H1 (cell line): ENCODE measurements at regions of chr9 and their contacts with region 1.

Region 1: GRCh38 chr9:34451545-34451944 is 6.8 kb downstream of the FAM219A start:
- DNase-seq: no peak
- H3K4me3 ChIP-seq: no peak overlapping the region
- H3K27ac ChIP-seq: no peak overlapping the region
- H3K4me1 ChIP-seq: peaks cover 0 to 4% (median 3%) of the 10 kb centered on the region in 4 experiments; a peak in 3 of 7 replicates
- H3K27me3 ChIP-seq: no peaks in the 10 kb centered on the region; a peak in 2 of 7 replicates
- CTCF ChIP-seq: no peak
- EP300 ChIP-seq: no peak
- POLR2A ChIP-seq: no peak
- RAD21 ChIP-seq: no peak

Region 2: DNA sequence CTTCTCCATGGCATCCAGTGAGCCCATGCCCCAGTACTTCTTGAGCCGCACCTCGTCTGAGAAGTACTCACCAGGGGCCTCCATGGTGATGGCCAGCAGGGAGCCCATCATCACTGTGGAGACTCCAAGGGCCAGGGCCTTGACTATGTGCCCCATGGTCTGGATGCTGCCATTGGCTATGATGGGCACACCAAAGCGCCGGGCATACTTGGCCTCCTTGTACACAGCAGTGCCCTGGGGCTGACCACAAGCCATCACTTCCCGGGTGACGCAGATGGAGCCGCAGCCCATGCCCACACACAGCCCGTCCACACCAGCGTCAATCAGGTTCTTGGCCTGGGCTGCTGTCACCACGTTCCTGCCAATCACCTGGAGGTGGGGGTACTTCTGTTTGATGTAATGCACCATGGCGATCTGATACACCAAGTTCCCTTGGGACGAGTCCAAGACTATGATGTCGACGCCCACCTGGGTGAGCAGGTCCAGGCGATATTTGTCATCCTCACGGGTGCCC is 318.1 kb before region 1 on chr9:
- CTCF ChIA-PET with region 1: no interaction called
- POLR2A ChIA-PET with region 1: no interaction called
- DNase-seq: no peak
- H3K4me3 ChIP-seq: no peak overlapping the region
- H3K27ac ChIP-seq: no peak overlapping the region
- H3K4me1 ChIP-seq: no peaks in the 10 kb centered on the region
- H3K27me3 ChIP-seq: no peaks in the 10 kb centered on the region
- CTCF ChIP-seq: no peak
- EP300 ChIP-seq: no peak
- POLR2A ChIP-seq: no peak
- RAD21 ChIP-seq: no peak

Region 3: DNA sequence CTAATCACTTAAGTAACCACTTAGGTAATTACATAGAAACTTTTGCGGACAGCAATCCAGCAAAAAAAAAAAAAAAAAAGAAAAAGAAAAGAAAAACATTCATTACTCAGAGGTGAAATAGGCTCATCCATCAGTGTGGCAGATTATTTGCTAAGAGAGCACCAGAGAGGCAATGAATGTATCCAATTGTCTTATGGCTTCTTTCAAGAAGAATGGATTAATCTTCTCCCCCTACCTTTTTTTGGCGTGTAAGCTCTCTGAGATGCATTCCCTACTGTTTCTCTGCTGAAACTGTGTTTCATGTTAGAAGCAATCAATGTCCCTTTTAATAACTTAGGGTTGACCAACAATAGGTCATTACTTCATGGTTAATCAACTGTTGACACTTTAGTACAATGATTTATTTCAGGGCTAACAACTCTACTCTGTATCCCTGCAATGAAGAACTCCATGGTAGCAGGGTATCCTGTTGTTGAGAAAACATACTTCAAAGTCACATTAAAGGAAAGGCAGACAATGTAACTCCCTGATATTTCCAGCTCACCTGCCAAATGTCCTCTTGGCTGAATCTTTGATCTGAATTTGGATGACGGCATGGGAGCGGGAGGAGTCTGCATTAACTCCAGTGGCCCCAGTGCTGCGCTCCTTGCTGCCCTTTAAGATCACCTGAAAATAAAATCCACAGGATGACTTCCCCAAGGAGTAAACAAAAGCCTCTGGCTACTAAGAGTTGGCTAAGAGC is 180.1 kb before region 1 on chr9:
- CTCF ChIA-PET with region 1: no interaction called
- POLR2A ChIA-PET with region 1: no interaction called
- DNase-seq: no peak
- H3K4me3 ChIP-seq: no peak overlapping the region
- H3K27ac ChIP-seq: no peak overlapping the region
- H3K4me1 ChIP-seq: no peaks in the 10 kb centered on the region
- H3K27me3 ChIP-seq: no peaks in the 10 kb centered on the region
- CTCF ChIP-seq: no peak
- EP300 ChIP-seq: no peak
- POLR2A ChIP-seq: no peak
- RAD21 ChIP-seq: no peak

Region 4: DNA sequence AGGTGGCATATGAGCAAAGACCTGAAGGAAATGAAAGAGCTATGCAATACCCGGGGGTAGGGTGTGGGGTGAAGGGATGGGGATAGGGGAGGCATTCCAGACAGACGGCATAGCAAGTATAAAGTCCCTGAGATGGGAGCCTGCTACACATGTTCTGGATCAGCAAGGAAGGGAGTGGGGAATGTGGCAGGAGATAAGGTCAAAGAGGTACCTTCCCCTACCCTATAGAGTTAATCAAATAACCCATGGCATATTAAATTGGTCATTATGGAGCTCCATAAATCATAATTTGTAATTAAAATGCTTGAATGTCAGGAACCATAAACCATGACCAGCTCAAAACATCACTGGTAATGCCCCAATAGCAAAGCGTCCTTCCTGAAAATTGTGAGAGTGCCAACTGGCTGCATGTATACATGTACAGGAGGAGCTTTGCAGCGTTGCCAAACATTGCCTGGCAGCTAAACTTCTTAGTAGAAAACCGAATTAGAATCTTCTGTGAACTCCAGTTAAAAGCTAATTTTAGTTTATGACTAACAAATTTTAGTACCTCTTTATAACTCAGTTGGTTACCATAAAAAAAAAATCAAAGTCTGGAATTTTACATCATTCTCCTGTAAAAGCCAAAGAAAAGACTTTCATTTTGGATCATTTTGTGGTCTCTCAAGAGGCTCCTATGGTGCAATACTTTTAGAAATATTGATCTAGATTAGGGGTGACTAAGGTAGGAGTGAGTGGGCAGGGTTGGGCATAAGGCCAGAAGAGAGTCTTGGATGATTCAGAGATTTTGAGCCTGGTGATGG is 11.8 kb after region 1 on chr9:
- CTCF ChIA-PET with region 1: interaction called, 10 read pairs
- POLR2A ChIA-PET with region 1: interaction called, 6 read pairs
- DNase-seq: no peak
- H3K4me3 ChIP-seq: no peak overlapping the region
- H3K27ac ChIP-seq: no peak overlapping the region
- H3K4me1 ChIP-seq: peaks cover 0 to 5% (median 1%) of the 10 kb centered on the region in 4 experiments; a peak in 3 of 7 replicates
- H3K27me3 ChIP-seq: peaks cover 0 to 2% (median under 1%) of the 10 kb centered on the region in 4 experiments; a peak in 2 of 7 replicates
- CTCF ChIP-seq: no peak
- EP300 ChIP-seq: no peak
- POLR2A ChIP-seq: no peak
- RAD21 ChIP-seq: no peak

Region 5: GRCh38 chr9:34517185-34517584 is 65.6 kb after region 1 on chr9:
- CTCF ChIA-PET with region 1: no interaction called
- POLR2A ChIA-PET with region 1: no interaction called
- DNase-seq: no peak
- H3K4me3 ChIP-seq: no peak overlapping the region
- H3K27ac ChIP-seq: no peak overlapping the region
- H3K4me1 ChIP-seq: peaks cover 13 to 19% (median 17%) of the 10 kb centered on the region in 4 experiments
- H3K27me3 ChIP-seq: peaks cover 1 to 8% (median 6%) of the 10 kb centered on the region in 4 experiments; a peak in 5 of 7 replicates
- CTCF ChIP-seq: no peak
- EP300 ChIP-seq: no peak
- POLR2A ChIP-seq: no peak
- RAD21 ChIP-seq: no peak